ENCODE measurements at regions of chr5 and their contacts with region 1.

Region 1: DNA sequence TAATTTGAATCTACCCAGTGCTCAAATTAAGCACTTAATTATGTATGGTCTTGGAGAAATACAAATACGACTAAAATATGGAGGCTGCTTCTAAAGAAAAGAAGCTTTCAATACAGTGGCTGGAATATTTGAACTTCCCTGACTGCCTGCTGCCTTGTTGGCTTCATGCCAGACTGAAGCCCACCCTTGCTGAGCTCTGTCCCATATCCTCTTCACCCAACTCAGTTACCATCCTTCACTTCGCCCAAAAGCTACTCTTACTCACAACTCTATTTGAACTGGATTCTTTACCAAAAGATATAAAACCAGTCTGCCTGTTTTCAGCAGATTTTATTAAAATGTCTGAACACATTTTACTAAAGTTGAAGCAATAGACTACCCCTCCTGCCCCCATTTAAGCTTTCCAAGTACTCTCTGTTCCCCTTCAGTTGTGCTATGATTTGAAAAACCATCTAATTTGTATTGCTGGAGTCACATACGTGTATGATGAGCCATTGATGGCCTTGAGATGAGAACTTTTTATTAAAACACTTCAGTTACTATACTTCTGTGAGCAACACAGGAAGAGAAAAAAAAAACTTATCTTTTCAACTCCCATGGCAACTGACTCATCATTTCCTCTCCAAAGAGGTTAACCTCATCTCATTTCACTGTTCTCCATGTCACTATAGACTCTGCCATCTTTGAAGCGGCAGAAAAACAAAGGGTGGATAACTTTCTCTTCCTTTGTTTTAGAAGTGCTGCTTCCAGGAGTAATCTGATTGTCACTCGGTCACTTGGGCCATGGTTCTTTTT is 104.1 kb upstream of the PCSK1 start:
- DNase-seq: peak; percentile 32
- H3K4me3 Mint-ChIP-seq: no peak overlapping the region
- H3K27ac Mint-ChIP-seq: peak overlapping the region; percentile 78
- H3K4me1 Mint-ChIP-seq: peaks cover 26% of the 10 kb centered on the region
- H3K27me3 Mint-ChIP-seq: peaks cover 3% of the 10 kb centered on the region

Region 2: GRCh38 chr5:96079075-96079474 is 458.1 kb before region 1 on chr5:
- intact Hi-C with region 1: loop called (anchors 5 kb)
- DNase-seq: no peak
- H3K4me3 Mint-ChIP-seq: no peak overlapping the region
- H3K27ac Mint-ChIP-seq: peak overlapping the region; percentile 73
- H3K4me1 Mint-ChIP-seq: peaks cover 53% of the 10 kb centered on the region
- H3K27me3 Mint-ChIP-seq: no peaks in the 10 kb centered on the region

Region 3: DNA sequence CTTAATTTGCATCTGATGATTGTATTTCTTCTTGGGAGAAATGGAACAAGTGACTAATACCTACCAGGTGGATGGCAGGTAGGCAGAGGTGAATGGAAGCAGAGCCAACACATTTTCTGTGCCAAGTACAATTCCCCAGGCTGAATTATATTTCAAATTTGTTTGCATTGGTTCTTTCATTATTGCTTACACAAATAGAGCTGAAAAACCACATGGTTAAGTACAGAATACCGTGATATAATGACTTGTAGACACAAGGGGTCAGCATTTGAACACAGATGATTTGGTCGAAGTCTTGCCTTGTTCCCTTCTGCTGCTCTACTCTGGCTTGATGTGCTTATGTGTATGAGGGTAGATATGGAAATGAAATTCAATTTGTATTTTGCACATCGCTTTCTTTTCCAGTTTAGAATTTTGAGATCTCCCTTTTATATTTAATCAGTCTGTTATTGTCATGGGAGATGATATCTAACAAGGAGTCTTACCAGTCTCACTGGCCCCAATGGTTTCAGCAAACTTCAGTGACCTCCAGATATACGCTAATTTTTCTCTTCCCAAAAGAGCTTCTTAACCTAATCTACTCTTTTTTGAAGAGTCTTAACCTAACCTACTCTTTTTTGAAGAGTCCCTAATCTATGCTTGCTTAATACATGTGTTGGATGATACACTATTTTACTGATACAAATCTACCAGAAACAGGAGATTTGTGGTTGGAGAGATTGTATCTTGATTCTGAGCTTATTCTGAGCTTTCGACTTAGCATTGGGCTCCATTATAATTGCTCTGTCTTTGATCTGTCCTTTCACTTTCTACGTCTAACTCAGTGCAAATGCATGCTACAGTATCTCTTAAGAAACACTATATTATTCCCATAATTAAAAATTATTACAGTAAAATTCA is 192.3 kb before region 1 on chr5:
- intact Hi-C with region 1: loop called (anchors 2 kb)
- DNase-seq: no peak
- H3K4me3 Mint-ChIP-seq: no peak overlapping the region
- H3K27ac Mint-ChIP-seq: peak overlapping the region; percentile 1
- H3K4me1 Mint-ChIP-seq: peaks cover 22% of the 10 kb centered on the region
- H3K27me3 Mint-ChIP-seq: peaks cover 35% of the 10 kb centered on the region

Region 4: DNA sequence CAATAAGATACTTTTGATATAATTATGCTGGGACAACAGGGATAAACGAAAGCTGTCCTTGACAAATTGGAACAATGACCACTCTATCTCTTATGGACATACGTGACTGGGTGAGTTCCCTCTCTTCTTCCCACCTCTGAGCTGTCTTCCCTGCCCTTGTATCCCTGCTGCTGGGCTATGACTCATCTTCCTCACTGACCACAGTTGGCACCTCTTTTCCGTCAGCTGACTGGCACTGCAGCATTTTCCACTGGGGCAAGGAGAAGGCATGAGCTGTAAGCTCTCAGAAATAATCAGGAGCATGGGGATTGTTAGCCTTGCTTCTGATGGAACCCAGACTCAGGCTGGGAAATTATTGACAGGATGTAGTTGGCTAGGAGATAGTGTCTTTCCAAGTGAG is 152.8 kb before region 1 on chr5:
- intact Hi-C with region 1: no loop called
- DNase-seq: no peak
- H3K4me3 Mint-ChIP-seq: no peak overlapping the region
- H3K27ac Mint-ChIP-seq: no peak overlapping the region
- H3K4me1 Mint-ChIP-seq: no peaks in the 10 kb centered on the region
- H3K27me3 Mint-ChIP-seq: peaks cover 10% of the 10 kb centered on the region

Region 5: DNA sequence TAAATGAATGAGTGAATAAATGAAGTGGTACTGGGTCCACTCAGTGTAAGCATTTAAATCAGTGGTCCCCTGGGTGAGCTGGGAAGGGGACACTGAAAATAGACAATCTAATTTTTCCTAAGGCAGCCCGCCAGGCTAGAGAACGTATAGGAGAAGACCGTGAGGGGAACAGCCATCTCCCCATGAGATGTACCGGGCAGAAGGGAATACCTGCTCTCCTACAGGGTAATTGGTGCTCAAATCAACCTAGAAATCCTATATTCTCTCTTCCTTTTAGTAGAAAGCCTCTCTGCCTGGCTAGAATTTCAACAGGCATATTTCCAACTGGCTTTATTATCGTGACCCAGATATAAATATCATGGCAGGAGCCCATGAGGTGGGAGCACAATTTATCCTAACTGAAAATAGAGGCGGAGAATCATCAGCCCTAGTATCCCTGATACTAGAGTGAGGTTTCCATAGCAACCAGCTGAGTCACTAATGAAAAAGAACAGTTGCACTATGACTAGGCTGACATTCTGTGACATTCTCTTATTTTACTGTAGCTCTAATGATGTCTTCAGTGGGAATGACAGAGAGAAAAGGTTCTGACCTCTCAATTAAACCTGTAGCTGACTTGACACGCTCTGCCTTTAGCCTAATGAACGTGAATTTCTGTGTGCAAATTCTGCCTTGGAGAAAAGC is 28.5 kb after region 1 on chr5:
- intact Hi-C with region 1: loop called (anchors 2 kb)
- DNase-seq: no peak
- H3K4me3 Mint-ChIP-seq: no peak overlapping the region
- H3K27ac Mint-ChIP-seq: no peak overlapping the region
- H3K4me1 Mint-ChIP-seq: peaks cover 18% of the 10 kb centered on the region
- H3K27me3 Mint-ChIP-seq: no peaks in the 10 kb centered on the region

Region 6: GRCh38 chr5:96595300-96596090 is 58.3 kb after region 1 on chr5:
- intact Hi-C with region 1: loop called (anchors 1 kb)
- DNase-seq: no peak
- H3K4me3 Mint-ChIP-seq: no peak overlapping the region
- H3K27ac Mint-ChIP-seq: no peak overlapping the region
- H3K4me1 Mint-ChIP-seq: peaks cover 29% of the 10 kb centered on the region
- H3K27me3 Mint-ChIP-seq: peaks cover 15% of the 10 kb centered on the region

Region 7: GRCh38 chr5:96714951-96715451 is 177.8 kb after region 1 on chr5:
- intact Hi-C with region 1: no loop called
- DNase-seq: no peak
- H3K4me3 Mint-ChIP-seq: no peak overlapping the region
- H3K27ac Mint-ChIP-seq: peak overlapping the region; percentile 41
- H3K4me1 Mint-ChIP-seq: peaks cover 15% of the 10 kb centered on the region
- H3K27me3 Mint-ChIP-seq: no peaks in the 10 kb centered on the region

Region 8: DNA sequence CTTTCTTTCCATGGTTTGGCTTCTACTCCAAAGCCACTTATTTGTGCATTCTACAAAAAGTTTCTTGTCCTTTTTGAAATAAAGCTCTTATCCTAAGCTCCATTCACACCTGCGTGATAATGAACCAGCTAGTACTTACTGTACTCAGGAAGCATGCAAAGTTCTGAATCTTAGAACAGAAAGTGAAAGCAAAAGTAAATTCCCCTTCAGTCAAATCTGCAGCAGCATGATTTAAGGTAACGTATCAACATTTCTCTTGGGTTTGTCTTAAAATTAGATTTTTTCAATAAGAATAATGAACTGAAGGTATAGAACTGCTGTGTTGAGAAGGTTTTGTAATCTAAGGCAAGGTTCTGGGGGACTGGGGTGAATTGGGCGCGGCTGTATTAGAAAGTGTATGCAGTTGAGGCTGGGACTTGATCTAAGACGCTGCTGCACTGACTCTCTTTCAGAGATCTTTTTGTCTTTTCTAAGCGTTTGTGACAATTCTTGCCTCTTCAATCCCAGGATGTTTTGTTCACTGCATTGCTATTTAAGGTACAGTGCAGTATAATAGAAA is 339.2 kb after region 1 on chr5 and contains the start of gene ERAP2:
- intact Hi-C with region 1: loop called (anchors 10 kb)
- DNase-seq: no peak
- H3K4me3 Mint-ChIP-seq: peak within 1 kb of the TSS; percentile 93
- H3K27ac Mint-ChIP-seq: peak within 1 kb of the TSS; percentile 99
- H3K4me1 Mint-ChIP-seq: peaks cover 66% of the 10 kb centered on the region
- H3K27me3 Mint-ChIP-seq: no peaks in the 10 kb centered on the region
- total RNA-seq, gene ERAP2: 52.9 and 54.4 TPM in 2 replicates

Region 9: DNA sequence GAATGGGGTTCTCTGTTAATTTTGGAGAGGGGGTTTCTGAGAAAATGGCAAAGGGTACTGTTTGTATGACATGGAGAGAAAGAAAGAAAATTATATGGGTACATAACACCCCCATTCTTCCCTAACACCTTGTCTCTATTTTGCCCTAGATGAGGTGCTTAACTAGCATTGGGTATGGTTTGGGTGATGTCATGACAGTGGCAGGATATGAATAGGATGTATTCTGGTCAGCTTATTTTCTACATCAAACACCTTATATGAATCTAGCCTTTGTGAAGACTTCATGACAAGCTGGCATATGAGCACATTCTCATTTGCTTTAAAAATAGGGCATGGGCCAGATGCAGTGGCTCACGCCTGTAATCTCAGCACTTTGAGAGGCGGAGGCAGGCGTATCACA is 457.3 kb after region 1 on chr5:
- intact Hi-C with region 1: no loop called
- DNase-seq: no peak
- H3K4me3 Mint-ChIP-seq: no peak overlapping the region
- H3K27ac Mint-ChIP-seq: peak overlapping the region; percentile 33
- H3K4me1 Mint-ChIP-seq: peaks cover 53% of the 10 kb centered on the region
- H3K27me3 Mint-ChIP-seq: no peaks in the 10 kb centered on the region

Region 10: GRCh38 chr5:97183100-97183929 is 646.1 kb after region 1 on chr5 and contains the start of gene RIOK2:
- intact Hi-C with region 1: loop called (anchors 10 kb)
- DNase-seq: peak; percentile 86
- H3K4me3 Mint-ChIP-seq: peak within 1 kb of the TSS; percentile 91
- H3K27ac Mint-ChIP-seq: peak within 1 kb of the TSS; percentile 100
- H3K4me1 Mint-ChIP-seq: peaks cover 42% of the 10 kb centered on the region
- H3K27me3 Mint-ChIP-seq: peaks cover 9% of the 10 kb centered on the region
- total RNA-seq, gene RIOK2: 37.2 and 47.2 TPM in 2 replicates